ENCODE measurements at regions of chr4 and their contacts with region 1.

Region 1: DNA sequence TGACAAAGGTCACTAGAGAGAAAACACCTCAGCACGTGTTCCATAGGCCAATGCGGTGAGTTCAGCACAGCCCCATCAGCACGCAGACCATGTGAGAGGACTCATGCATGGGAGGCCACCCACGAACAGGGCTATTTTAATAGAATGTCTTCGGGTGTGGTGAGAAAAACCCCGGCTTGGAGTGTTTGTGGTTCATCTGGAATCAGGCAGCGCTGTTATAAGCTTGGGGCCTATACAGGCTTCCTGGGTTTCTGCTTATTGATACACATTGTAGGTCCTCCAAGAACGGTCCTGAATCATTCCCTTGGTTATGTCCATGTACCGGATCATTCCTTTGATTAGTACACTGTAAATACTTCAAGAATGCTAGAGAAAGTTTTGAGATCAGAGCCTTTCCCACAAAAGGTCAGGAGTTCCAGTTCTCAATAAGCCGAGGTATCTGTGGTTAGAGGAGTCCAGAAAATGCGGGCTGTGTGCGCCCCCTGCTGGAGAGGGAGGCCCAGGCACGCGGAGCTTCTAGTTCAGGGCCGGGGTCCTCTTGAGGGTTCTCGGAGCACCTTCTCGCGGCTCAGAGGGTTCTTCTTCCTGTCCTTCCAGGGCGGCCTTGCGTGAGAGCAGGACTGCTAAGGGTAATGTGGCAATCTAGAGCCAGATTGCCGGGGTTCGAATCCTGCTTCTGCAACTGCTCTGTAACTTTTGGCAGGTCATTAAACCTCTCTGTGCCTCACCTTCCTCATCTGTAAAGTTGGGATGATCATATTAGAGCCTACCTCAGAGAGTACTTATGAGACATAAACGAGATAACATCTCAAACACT is 51.8 kb downstream of the TLR10 start:
- DNase-seq: peak; percentile 80 to 87
- ATAC-seq: peak; percentile 77 to 87 (median 83)
- H3K4me3 ChIP-seq: no peak overlapping the region
- H3K27ac ChIP-seq: no peak overlapping the region
- H3K4me1 ChIP-seq: no peaks in the 10 kb centered on the region
- H3K27me3 ChIP-seq: no peaks in the 10 kb centered on the region
- CTCF ChIP-seq: peak; percentile 96

Region 2: GRCh38 chr4:38078590-38079421 is 652.2 kb before region 1 on chr4:
- intact Hi-C with region 1: loop called in 1 of 2 experiments (anchors 5 kb)
- DNase-seq: no peak
- ATAC-seq: no peak
- H3K4me3 ChIP-seq: no peak overlapping the region
- H3K27ac ChIP-seq: peak overlapping the region; percentile 10
- H3K4me1 ChIP-seq: peaks cover 6% of the 10 kb centered on the region
- H3K27me3 ChIP-seq: no peaks in the 10 kb centered on the region
- CTCF ChIP-seq: no peak

Measured in psoas muscle (tissue), 8 donors.